ENCODE measurements at regions of chr1 and their contacts with region 1.

Region 1: DNA sequence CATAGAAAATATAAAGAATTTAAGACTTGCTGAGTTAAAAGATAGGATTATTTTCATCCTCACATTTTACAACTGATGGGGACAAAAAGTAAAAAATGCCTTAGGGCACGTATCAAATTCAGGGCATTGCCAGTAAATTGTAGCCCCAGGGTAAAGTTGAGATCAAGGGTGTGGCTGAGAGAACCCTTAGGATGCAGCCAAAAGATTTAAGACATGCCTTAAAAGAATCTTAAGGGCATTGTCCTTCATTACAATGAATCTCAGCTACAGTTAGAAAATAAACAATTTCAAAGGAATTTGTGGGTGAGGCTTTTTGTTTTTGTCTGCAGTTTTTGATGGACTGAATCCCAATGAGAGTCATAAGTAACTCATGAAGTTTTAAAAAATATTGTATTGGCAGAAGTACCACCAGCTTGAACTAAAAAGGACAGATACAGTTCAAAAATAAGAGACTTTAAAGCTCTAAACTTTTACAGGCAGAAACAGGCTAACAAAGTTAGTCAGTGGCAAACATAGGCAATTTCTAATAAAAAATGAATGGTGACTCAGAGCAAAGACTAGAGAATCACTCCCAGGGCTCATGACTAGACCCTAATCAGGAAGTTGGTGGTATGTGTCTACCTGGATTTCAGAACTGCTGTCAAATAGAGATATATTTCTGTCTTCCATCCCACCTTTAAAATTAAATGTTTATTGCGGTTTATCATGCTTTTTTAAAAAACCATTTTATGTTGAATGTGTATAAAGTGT is 165.1 kb upstream of the SNX7 start:
- DNase-seq: no peak
- H3K4me3 ChIP-seq: no peak overlapping the region
- H3K27ac ChIP-seq: no peak overlapping the region
- H3K4me1 ChIP-seq: no peaks in the 10 kb centered on the region
- H3K27me3 ChIP-seq: peaks cover 0 to 2% of the 10 kb centered on the region in 2 experiments
- CTCF ChIP-seq: no peak
- POLR2A ChIP-seq: no peak

Region 2: GRCh38 chr1:97094280-97094972 is 1402.0 kb before region 1 on chr1:
- CTCF ChIA-PET with region 1: no interaction called
- POLR2A ChIA-PET with region 1: no interaction called
- dilution Hi-C with region 1: no loop called
- intact Hi-C with region 1: loop called (anchors 10 kb)
- DNase-seq: peak; percentile 64
- H3K4me3 ChIP-seq: no peak overlapping the region
- H3K27ac ChIP-seq: peak overlapping the region; percentile 70
- H3K4me1 ChIP-seq: peaks cover 33% of the 10 kb centered on the region
- H3K27me3 ChIP-seq: no peaks in the 10 kb centered on the region
- CTCF ChIP-seq: no peak
- POLR2A ChIP-seq: no peak